ENCODE measurements at regions of chr3 and their contacts with region 1.

Region 1: DNA sequence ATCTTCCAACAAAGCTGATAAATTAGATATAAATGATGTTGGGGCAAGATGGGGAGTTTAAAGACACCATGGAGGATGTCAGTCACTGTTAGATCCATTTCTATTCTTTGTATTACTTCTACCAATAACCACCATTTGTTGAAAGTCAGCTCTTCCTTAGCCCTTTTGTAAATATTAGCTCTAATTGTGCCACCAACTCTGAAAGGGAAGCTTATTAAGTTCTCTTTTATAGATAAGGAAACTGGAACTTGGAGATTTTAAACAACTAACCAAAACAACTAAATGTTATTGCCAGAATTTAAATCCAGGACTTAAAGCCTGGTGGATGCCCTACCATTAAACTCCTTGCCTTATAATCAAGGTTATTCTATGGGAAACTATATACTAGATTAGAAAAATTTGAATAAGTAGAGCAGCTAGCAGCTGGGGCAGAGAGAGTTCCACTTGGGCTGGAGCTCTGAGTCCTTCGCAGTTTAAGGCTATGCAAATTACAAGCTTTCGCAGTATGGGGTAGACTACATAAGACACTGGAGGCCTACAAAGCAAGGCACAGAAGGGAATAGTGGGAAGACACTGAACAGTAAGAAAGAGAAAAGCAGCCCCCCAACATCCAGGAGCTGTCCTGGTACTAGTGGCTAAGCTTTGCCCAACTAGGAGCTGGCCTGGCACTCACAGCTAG is 52.6 kb downstream of the TM4SF18 start:
- DNase-seq: no peak
- ATAC-seq: no peak
- H3K4me3 ChIP-seq: no peak overlapping the region
- H3K27ac ChIP-seq: peak overlapping the region; percentile 91
- H3K4me1 ChIP-seq: peaks cover 34% of the 10 kb centered on the region
- H3K27me3 ChIP-seq: no peaks in the 10 kb centered on the region
- CTCF ChIP-seq: no peak

Region 2: DNA sequence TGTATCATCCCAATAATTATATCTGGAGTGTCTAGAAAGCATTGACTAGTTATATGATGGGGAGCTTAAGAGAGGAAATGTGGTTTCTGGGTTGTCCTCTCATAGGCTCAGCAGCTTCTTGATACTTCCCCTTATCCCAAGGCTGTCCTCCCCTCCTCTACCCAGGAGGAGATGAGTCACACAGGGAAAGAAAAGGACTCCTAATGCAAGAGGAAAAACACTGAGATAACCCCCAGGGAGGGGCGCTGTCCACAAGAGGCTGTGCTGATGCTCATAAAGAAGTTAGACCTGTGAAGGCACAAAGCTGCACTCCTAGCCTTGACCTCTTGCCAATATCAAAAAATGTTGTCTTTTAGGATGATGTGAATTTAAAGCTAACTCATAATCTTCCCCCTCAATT is 318.3 kb before region 1 on chr3:
- CTCF ChIA-PET with region 1: no interaction called
- POLR2A ChIA-PET with region 1: no interaction called
- in situ Hi-C with region 1: no loop called
- intact Hi-C with region 1: no loop called
- DNase-seq: no peak
- ATAC-seq: 0 out of 2 replicates have a peak, but pooled peaks have one; percentile 50
- H3K4me3 ChIP-seq: no peak overlapping the region
- H3K27ac ChIP-seq: no peak overlapping the region
- H3K4me1 ChIP-seq: no peaks in the 10 kb centered on the region
- H3K27me3 ChIP-seq: no peaks in the 10 kb centered on the region
- CTCF ChIP-seq: peak; percentile 26; the same call in 1 of the 2 replicates

Region 3: DNA sequence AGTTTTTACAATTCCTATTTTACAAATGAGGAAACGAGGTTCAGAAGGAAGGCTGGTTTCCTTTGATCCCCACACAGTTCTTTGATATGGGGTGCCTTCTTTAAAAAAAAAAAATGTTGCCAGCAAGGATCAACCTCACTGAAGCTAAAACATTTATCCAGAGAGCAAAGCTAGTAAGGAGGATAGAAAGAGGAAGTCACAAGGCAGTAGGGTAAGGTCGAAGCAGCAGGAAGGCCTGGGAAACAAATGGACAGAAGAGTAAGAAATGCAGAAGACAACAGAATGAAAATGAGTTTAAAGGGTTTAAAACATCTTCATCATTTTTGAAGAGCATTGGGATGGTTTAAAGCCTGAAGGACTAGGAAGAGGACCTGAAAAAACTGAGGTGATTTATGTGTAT is 28.5 kb before region 1 on chr3:
- CTCF ChIA-PET with region 1: no interaction called
- POLR2A ChIA-PET with region 1: no interaction called
- in situ Hi-C with region 1: no loop called
- intact Hi-C with region 1: no loop called
- DNase-seq: no peak
- ATAC-seq: no peak
- H3K4me3 ChIP-seq: no peak overlapping the region
- H3K27ac ChIP-seq: peak overlapping the region; percentile 62; the same call in 1 of the 2 replicates
- H3K4me1 ChIP-seq: peaks cover 20% of the 10 kb centered on the region
- H3K27me3 ChIP-seq: no peaks in the 10 kb centered on the region
- CTCF ChIP-seq: no peak

Region 4: DNA sequence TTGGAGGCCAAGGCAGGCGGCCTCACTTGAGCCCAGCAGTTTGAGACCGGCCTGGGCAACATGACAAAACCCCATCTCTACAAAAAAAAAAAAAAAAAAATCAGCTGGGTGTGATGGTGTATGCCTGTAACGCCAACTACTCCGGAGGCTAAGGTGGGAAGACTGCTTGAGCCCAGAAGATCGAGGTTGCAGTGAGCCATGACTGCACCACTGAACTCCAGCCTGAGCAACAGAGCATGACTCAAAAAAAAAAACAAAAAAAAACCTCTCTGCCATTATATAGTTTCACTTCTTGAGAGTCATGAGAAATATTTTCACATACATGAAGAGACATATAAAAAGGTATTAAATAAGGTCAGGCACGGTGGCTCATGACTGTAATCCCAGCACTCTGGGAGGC is 13.2 kb before region 1 on chr3:
- CTCF ChIA-PET with region 1: no interaction called
- POLR2A ChIA-PET with region 1: no interaction called
- in situ Hi-C with region 1: no loop called
- intact Hi-C with region 1: no loop called
- DNase-seq: no peak
- ATAC-seq: no peak
- H3K4me3 ChIP-seq: no peak overlapping the region
- H3K27ac ChIP-seq: peak overlapping the region; percentile 2; the same call in 1 of the 2 replicates
- H3K4me1 ChIP-seq: no peaks in the 10 kb centered on the region
- H3K27me3 ChIP-seq: no peaks in the 10 kb centered on the region
- CTCF ChIP-seq: no peak

Region 5: DNA sequence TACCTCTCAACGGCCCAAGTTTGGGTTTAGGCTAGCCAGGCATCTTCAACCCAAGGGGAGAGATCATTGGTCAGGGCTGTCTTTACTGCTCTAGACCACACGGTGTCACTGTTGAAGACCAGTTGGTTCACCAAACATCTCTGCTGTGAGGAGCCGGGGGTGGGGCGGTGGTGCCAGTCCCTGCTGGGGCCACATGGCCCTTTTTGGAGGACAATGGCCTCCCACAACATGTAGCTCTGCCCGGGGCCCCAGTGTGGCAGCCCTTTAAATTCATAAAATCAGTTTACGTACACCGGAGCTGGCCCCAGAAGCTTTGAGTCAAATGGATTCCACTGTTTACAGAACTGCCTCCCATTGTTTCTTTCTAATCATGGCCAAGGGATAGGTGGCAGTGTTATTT is 71.7 kb after region 1 on chr3:
- CTCF ChIA-PET with region 1: no interaction called
- POLR2A ChIA-PET with region 1: interaction called, 6 read pairs
- in situ Hi-C with region 1: loop called (anchors 10 kb)
- intact Hi-C with region 1: no loop called
- DNase-seq: no peak
- ATAC-seq: peak; percentile 75
- H3K4me3 ChIP-seq: no peak overlapping the region
- H3K27ac ChIP-seq: peak overlapping the region; percentile 82
- H3K4me1 ChIP-seq: peaks cover 6% of the 10 kb centered on the region; the same call in 1 of the 2 replicates
- H3K27me3 ChIP-seq: no peaks in the 10 kb centered on the region
- CTCF ChIP-seq: peak; percentile 74